ENCODE measurements at regions of chr22 and their contacts with region 1.

Region 1: DNA sequence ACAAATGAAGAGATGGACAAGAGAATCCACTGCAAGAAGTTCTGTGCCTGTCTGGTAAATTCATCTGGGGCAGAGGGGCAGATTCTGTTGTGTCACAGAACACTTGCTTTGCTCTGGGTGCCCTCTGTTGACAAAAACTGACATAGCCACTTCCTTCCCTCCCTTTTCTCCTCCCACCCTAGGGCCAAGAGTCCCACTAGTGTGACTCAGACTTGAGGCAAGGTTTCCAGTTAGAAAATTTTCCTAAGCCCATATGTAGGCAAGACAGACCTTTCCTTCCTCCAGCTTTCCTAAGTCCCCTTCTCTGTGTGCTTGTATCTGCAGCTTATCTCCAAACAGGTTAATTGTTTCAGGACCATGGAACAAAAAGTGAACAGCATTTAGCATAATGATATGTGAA is 106.8 kb downstream of the RBFOX2 start:
- DNase-seq: peak in 1 of 2 donors; percentile 82
- ATAC-seq: peak; percentile 81 to 94 (median 90)
- H3K4me3 ChIP-seq: no peak overlapping the region
- H3K27ac ChIP-seq: peak overlapping the region in 6 of 10 donors; percentile 33 to 93 (median 58)
- H3K4me1 ChIP-seq: peaks cover 0 to 74% (median 53%) of the 10 kb centered on the region in 9 donors
- H3K27me3 ChIP-seq: no peaks in the 10 kb centered on the region
- CTCF ChIP-seq: peak; percentile 34 to 88 (median 75)

Region 2: DNA sequence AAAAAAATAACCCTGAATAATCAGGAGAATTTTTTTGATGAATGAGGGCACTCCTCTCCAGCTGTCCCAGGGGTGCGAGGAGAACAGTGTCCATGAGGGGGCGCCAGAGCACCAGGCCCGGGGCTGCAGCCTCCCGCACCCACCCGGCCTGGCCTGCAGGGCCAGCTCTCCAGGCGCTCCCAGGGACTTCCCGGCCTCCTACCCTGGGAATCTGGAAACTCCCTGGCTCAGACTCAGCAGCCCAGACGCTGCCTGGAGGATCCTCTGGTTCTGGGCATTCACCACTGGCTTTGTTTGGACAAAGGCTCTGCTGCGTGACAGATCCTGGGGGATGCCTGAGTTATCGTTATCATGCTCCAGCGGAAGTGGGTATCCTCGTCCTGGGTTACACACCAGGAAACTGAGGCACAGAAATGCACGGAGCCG is 490.9 kb before region 1 on chr22:
- intact Hi-C with region 1: loop called in 4 of 10 experiments (anchors 5 to 10 kb)
- DNase-seq: peak; percentile 90 to 91
- ATAC-seq: peak; percentile 94 to 99 (median 98)
- H3K4me3 ChIP-seq: no peak overlapping the region
- H3K27ac ChIP-seq: peak overlapping the region in 5 of 10 donors; percentile 14 to 69 (median 48)
- H3K4me1 ChIP-seq: peaks cover 0 to 14% (median 8%) of the 10 kb centered on the region in 9 donors
- H3K27me3 ChIP-seq: no peaks in the 10 kb centered on the region
- CTCF ChIP-seq: peak; percentile 94 to 99 (median 97)

Region 3: DNA sequence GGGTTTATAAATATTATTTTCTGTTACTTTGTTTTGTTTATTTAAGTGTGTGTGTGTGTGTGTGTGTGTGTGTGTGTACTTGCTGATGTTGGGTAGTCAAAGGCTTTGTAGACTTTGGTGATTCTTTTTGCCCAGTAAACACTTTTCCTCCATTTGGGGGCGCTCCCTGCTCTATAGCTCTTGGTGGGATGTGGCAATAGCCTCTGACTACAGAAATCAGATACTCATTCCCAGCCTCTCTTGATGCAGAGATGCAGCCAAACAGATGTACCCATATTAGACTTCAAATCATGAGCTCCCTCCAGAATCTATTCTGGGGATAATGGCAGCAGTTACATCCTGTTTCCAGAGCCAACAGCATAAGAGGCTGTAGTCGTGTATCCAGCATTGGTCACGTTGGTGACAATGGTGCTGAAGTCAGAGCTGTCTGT is 237.5 kb before region 1 on chr22:
- intact Hi-C with region 1: loop called in 2 of 10 experiments (anchors 2 to 10 kb)
- DNase-seq: peak in 1 of 2 donors; percentile 28
- ATAC-seq: peak; percentile 67 to 96 (median 90)
- H3K4me3 ChIP-seq: no peak overlapping the region
- H3K27ac ChIP-seq: peak overlapping the region in 3 of 10 donors; percentile 5 to 31 (median 26)
- H3K4me1 ChIP-seq: peaks cover 0 to 12% (median 0%) of the 10 kb centered on the region in 9 donors
- H3K27me3 ChIP-seq: no peaks in the 10 kb centered on the region
- CTCF ChIP-seq: peak in 8 of 9 donors; percentile 5 to 47 (median 26)

Region 4: GRCh38 chr22:35749808-35750207 is 172.0 kb before region 1 on chr22:
- intact Hi-C with region 1: loop called in 4 of 10 experiments (anchors 5 to 10 kb)
- DNase-seq: no peak
- ATAC-seq: no peak
- H3K4me3 ChIP-seq: no peak overlapping the region
- H3K27ac ChIP-seq: no peak overlapping the region
- H3K4me1 ChIP-seq: peaks cover 0 to 60% (median 42%) of the 10 kb centered on the region in 9 donors
- H3K27me3 ChIP-seq: no peaks in the 10 kb centered on the region
- CTCF ChIP-seq: no peak

Region 5: DNA sequence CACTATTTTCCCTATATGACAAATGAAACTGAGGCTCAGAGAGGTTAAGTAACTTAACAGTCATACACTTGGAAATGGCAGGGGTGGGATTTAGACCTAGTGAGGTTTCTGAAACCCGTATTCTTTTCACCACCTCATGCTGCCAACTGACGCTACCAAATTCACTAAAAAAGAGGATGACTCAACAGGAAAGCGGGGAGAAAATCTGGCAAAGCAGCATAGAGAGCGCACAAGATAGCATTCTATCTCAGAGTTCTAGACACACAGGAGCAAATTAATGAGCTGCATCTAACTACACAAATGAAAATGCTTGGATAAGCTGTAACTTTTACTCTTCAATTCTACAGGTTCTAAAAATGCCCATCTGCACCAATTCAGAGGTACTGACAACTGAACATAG is 29.6 kb before region 1 on chr22:
- intact Hi-C with region 1: loop called in 1 of 10 experiments (anchors 2 kb)
- DNase-seq: no peak
- ATAC-seq: peak in 2 of 8 donors; percentile 44 to 49
- H3K4me3 ChIP-seq: peak overlapping the region in 8 of 10 donors; percentile 33 to 55 (median 50)
- H3K27ac ChIP-seq: peak overlapping the region in 9 of 10 donors; percentile 67 to 91 (median 87)
- H3K4me1 ChIP-seq: peaks cover 8 to 92% (median 42%) of the 10 kb centered on the region in 9 donors
- H3K27me3 ChIP-seq: no peaks in the 10 kb centered on the region
- CTCF ChIP-seq: no peak

Measured in heart right ventricle (tissue), 16 donors.